SK-N-SH (cell line): ENCODE measurements at regions of chr18 and their contacts with region 1.

Region 1: DNA sequence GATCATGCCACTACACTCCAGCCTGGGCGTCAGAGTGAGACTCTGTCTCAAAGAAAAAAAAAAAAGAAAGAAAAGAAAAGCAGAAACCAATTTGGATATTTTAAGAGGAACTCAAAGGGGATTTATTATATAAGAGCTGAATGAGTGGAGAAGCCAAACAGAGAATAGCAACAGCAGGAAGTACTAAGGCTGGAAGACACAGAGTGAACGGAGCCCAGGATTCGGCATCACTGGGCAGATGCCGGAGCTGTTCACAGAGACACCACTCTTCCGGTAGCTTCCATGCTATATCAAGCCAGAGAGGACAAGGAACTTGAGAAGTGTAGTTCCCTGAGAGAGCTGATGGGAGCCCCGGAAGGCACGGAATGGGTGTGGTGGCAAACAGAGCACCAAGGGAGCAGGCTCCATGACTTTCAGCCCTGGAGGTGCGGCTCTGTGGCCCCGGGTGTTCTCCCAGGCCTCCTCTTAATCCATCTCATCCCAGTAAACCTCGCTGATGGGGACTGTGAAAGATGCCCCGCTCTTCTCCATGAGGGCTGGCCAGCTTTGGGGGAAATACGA is 46.9 kb upstream of the CABLES1 start:
- DNase-seq: no peak
- H3K4me3 ChIP-seq: no peak overlapping the region
- H3K27ac ChIP-seq: no peak overlapping the region
- H3K4me1 ChIP-seq: peaks cover 5 to 16% of the 10 kb centered on the region in 2 experiments; a peak in 3 of 4 replicates
- H3K27me3 ChIP-seq: no peaks in the 10 kb centered on the region
- CTCF ChIP-seq: no peak
- EP300 ChIP-seq: no peak
- RAD21 ChIP-seq: no peak

Region 2: DNA sequence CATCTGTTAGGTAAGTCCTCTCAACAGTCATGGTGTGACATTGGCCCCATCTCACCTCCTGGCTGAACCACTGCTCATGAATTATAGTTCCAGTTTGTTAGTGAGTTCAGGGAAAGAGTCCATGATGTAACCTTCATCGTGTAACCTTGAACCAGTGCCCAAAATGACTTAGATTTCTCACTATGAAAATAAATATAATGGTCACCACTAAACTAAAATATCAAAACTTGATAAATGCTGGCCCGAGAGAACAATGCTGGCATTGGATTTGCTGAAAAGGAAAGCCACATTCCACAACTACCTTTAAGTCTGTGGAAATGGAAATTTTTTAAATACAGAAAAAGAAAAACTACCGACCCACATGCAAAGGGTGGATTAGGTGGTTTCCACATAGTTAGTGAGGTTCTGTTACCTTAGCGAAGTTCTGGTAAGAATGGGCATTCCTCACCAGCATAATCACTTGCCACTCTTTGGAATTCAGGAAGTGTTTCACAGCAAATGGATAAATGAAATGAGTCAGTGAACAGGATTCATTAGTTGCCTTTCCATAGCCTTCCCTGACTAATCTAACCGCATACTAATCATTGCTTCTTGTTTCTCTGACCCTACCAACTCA is 536.7 kb before region 1 on chr18:
- CTCF ChIA-PET with region 1: no interaction called
- POLR2A ChIA-PET with region 1: no interaction called
- DNase-seq: no peak
- H3K4me3 ChIP-seq: no peak overlapping the region
- H3K27ac ChIP-seq: no peak overlapping the region; a peak in 1 of 4 replicates
- H3K4me1 ChIP-seq: no peaks in the 10 kb centered on the region
- H3K27me3 ChIP-seq: peaks cover 31% of the 10 kb centered on the region
- CTCF ChIP-seq: no peak
- EP300 ChIP-seq: no peak
- RAD21 ChIP-seq: no peak

Region 3: GRCh38 chr18:23077493-23078256 is 10.7 kb before region 1 on chr18:
- CTCF ChIA-PET with region 1: interaction called, 11 read pairs
- POLR2A ChIA-PET with region 1: no interaction called
- DNase-seq: peak; percentile 36
- H3K4me3 ChIP-seq: no peak overlapping the region
- H3K27ac ChIP-seq: no peak overlapping the region
- H3K4me1 ChIP-seq: no peaks in the 10 kb centered on the region
- H3K27me3 ChIP-seq: no peaks in the 10 kb centered on the region
- CTCF ChIP-seq: peak; percentile 44
- EP300 ChIP-seq: no peak
- RAD21 ChIP-seq: peak; percentile 65